Caco-2 (cell line): ENCODE measurements at regions of chr11 and their contacts with region 1.

Region 1: DNA sequence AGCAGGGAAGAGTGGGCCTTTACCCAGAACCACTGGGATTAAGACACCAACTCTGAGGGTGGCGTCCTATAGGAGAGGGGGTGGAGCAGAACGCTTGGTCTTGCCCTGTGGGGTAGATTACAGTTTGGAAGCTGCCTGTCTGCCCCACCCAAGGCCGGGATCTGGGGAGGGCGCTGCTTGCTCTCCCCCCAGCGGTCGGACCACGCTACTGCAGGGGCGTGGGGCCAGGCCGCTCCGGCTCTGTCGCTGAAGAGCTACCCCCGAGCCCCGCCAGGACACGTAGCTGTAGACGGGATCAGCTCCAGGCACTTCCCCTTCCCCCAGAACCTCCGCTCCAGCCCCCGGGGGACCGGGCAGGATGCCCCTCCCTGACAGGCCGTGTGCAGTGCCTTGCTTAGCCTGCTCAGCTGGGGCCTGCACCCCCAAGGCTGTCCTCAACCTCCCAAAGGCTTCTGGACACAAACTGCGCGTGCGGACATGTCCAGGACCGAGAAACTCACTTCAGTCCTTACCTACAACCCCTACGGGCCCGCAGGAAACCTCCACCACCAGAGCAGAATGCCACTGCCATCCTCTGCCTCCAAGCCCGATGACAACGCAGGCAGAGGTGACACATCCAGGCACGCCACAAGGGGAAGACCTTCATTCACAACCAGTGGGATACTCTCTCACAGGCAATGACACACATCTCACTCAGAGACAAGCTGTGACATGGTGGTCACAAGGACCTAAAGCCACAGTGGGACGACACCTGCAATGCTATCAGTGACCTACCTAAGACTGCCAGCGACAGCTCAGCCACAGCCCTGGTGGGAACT is 3.6 kb downstream of the AHNAK start:
- DNase-seq: peak; percentile 73 to 88
- H3K4me3 ChIP-seq: peak overlapping the region; percentile 11
- H3K4me3 Mint-ChIP-seq: peak overlapping the region; percentile 100
- H3K27ac Mint-ChIP-seq: peak overlapping the region; percentile 97
- H3K4me1 ChIP-seq: peaks cover 58% of the 10 kb centered on the region
- H3K4me1 Mint-ChIP-seq: peaks cover 40% of the 10 kb centered on the region
- H3K27me3 ChIP-seq: no peaks in the 10 kb centered on the region
- H3K27me3 Mint-ChIP-seq: no peaks in the 10 kb centered on the region
- CTCF ChIP-seq: peak; percentile 97 to 98

Region 2: DNA sequence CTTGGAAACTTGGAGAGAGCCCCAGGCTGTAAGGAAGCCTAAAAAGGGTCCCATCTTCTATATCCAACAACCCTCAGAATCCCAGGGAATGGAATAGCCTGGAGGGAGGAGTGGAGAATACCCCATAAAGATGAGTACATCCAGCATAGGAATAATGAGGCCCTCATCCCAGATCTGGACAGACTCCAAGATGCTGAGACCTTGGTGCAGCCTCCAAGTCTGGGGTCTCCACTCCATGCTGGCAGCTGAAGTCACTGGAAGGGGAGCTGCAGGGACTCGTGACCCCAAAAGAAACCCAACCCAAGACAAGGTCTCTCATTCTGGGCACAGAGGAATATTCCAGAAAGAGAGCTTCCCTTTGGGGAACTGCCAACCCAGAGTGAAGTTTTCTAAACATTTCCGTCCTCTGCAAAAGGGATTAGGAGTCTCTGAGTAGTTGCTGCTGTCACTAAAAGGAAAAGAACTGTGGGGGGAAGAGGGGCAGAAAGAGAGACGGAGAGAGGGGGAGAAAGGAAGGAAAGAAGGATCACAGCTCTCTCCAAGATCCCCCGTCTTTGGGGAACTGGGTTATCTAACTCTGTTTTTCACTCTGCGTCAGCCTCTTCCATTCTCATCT is 123.5 kb before region 1 on chr11:
- CTCF ChIA-PET with region 1: interaction called, 56 read pairs
- POLR2A ChIA-PET with region 1: no interaction called
- intact Hi-C with region 1: no loop called
- DNase-seq: no peak
- H3K4me3 ChIP-seq: no peak overlapping the region
- H3K4me3 Mint-ChIP-seq: no peak overlapping the region
- H3K27ac Mint-ChIP-seq: no peak overlapping the region
- H3K4me1 ChIP-seq: peaks cover 24% of the 10 kb centered on the region
- H3K4me1 Mint-ChIP-seq: peaks cover 30% of the 10 kb centered on the region
- H3K27me3 ChIP-seq: no peaks in the 10 kb centered on the region
- H3K27me3 Mint-ChIP-seq: no peaks in the 10 kb centered on the region
- CTCF ChIP-seq: no peak

Region 3: DNA sequence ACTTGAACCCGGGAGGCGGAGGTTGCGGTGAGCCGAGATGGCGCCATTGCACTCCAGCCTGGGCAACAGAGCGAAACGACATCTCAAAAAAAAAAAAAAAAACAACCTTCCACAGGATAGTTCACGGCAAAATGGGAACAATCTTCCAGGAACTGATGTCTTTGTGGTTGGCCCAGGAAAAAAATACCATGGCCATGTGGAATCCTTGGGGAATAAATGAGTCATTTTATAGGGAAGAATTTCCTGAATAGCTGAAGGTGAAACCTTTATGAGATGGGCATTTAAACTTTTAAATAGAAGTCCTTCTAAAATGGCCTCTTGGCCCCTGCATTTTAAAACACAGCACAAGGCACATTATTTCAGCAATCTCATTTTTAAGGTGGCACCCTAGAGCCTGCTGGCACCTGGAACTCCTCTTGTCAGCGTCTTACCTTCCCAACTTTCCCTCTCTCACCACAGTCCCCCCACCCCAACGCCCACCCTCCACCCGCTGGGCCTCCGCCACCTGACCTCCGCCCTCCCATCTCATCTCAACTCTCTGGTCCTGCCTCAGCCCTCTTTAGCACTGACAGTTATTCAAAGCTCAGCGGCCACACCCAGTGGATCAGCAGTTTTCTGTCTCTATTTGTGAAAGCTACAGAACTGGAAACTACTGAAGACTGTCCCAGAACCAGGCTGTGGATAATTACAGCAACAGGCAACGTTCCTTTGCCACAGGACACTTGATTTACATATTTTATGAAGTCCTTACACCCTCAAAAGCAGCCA is 81.0 kb before region 1 on chr11:
- CTCF ChIA-PET with region 1: interaction called, 22 read pairs
- POLR2A ChIA-PET with region 1: no interaction called
- intact Hi-C with region 1: no loop called
- DNase-seq: no peak
- H3K4me3 ChIP-seq: no peak overlapping the region
- H3K4me3 Mint-ChIP-seq: no peak overlapping the region
- H3K27ac Mint-ChIP-seq: no peak overlapping the region
- H3K4me1 ChIP-seq: peaks cover 56% of the 10 kb centered on the region
- H3K4me1 Mint-ChIP-seq: peaks cover 46% of the 10 kb centered on the region
- H3K27me3 ChIP-seq: no peaks in the 10 kb centered on the region
- H3K27me3 Mint-ChIP-seq: no peaks in the 10 kb centered on the region
- CTCF ChIP-seq: no peak

Region 4: GRCh38 chr11:62497132-62497915 is 45.6 kb before region 1 on chr11:
- CTCF ChIA-PET with region 1: interaction called, 19 read pairs
- POLR2A ChIA-PET with region 1: interaction called, 3 read pairs
- intact Hi-C with region 1: loop called (anchors 1 kb)
- DNase-seq: peak; percentile 75 to 82
- H3K4me3 ChIP-seq: no peak overlapping the region
- H3K4me3 Mint-ChIP-seq: no peak overlapping the region
- H3K27ac Mint-ChIP-seq: peak overlapping the region; percentile 76
- H3K4me1 ChIP-seq: peaks cover 48% of the 10 kb centered on the region
- H3K4me1 Mint-ChIP-seq: peaks cover 33% of the 10 kb centered on the region
- H3K27me3 ChIP-seq: no peaks in the 10 kb centered on the region
- H3K27me3 Mint-ChIP-seq: no peaks in the 10 kb centered on the region
- CTCF ChIP-seq: peak; percentile 59 to 68

Region 5: GRCh38 chr11:62560566-62561103 is 17.7 kb after region 1 on chr11:
- CTCF ChIA-PET with region 1: interaction called, 38 read pairs
- POLR2A ChIA-PET with region 1: interaction called, 23 read pairs
- intact Hi-C with region 1: loop called (anchors 1 kb)
- DNase-seq: peak; percentile 97 to 98
- H3K4me3 ChIP-seq: no peak overlapping the region
- H3K4me3 Mint-ChIP-seq: peak overlapping the region; percentile 50
- H3K27ac Mint-ChIP-seq: peak overlapping the region; percentile 71
- H3K4me1 ChIP-seq: peaks cover 74% of the 10 kb centered on the region
- H3K4me1 Mint-ChIP-seq: peaks cover 59% of the 10 kb centered on the region
- H3K27me3 ChIP-seq: no peaks in the 10 kb centered on the region
- H3K27me3 Mint-ChIP-seq: no peaks in the 10 kb centered on the region
- CTCF ChIP-seq: peak; percentile 91 to 94

Region 6: DNA sequence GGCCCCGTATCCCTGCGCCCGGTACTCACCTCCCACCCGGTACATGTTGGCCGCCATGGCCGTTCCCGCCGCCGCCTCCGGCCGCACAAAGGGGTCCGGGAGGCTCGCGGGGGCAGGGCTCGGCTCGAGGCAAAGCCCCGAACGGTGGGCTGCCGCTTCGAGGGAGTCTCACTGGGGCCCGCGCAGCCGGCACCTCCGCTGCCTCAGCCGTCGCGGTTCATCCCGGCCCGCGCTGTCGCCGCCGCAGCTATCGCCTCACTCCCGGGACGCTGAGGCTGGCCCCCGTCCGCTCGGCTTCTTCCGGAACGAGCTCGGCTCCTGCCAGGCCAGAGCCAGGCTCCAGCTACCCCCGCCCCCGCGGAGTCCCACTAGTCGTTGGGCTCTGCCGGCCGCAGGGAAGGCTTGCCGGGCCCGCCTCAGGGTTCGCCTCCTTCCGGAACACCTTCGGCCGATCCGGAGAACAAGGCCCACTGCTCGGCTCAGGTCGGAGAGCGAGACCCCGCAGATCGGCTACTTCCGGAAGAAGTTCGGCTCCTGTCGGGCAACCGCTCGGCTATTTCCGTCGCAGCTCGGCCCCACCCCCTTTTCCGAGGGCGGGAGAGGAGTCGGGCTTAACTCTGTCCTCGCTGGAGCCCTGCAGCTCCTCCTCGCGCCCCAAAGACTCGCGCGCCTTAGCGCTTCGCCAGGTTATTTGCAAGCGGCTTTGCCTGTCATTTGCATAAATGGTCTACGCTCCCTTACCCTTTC is 58.6 kb after region 1 on chr11 and contains the start of gene MTA2:
- CTCF ChIA-PET with region 1: interaction called, 12 read pairs
- POLR2A ChIA-PET with region 1: interaction called, 6 read pairs
- intact Hi-C with region 1: no loop called
- DNase-seq: peak; percentile 99 to 100
- H3K4me3 ChIP-seq: peak within 1 kb of the TSS; percentile 97
- H3K4me3 Mint-ChIP-seq: peak within 1 kb of the TSS; percentile 88
- H3K27ac Mint-ChIP-seq: peak within 1 kb of the TSS; percentile 89
- H3K4me1 ChIP-seq: peaks cover 35% of the 10 kb centered on the region
- H3K4me1 Mint-ChIP-seq: peaks cover 36% of the 10 kb centered on the region
- H3K27me3 ChIP-seq: no peaks in the 10 kb centered on the region
- H3K27me3 Mint-ChIP-seq: no peaks in the 10 kb centered on the region
- CTCF ChIP-seq: no peak
- total RNA-seq, gene MTA2: 134 and 135 TPM in 2 replicates